Activated CD4-positive, alpha-beta T cell treated with anti-CD3 and anti-CD28 coated beads for 36 hours (primary cell): ENCODE measurements at regions of chr9 and their contacts with region 1.

Region 1: DNA sequence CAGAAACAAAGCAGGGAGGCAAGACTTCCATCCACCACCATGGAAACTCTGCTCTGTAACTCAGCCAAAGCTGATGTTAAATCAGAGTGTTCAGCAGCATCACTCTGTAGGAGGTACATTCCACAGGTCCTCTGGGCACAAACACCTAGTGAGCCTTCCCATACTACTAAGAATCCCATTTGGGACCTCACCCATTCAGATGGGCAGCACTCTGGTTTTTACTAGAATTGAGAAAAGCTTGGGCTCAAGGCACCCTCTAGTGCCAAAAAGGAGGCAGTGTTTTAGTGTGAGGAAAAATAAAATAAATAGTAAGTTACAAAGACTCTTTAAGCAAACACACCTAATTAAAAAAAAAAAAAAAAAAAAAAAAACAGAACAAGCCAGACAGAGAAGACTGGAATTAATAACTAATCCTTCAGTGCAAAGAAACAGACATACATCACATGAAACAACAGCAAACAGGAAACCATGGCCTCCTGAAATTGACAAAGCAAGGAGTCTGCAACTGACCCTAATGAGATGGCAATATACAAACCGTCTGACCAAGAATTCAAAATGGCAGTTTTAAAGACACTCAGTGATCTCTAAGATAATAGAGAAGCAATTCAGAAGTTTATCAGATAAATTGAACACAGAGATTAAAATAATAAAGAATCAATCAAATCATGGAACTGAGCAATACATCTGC is 159.5 kb downstream of the GNA14 start:
- DNase-seq: no peak
- ATAC-seq: peak; percentile 45
- H3K4me3 Mint-ChIP-seq: peak overlapping the region; percentile 57
- H3K27ac Mint-ChIP-seq: no peak overlapping the region
- H3K4me1 Mint-ChIP-seq: peaks cover 20% of the 10 kb centered on the region
- H3K27me3 Mint-ChIP-seq: peaks cover 3% of the 10 kb centered on the region

Region 2: GRCh38 chr9:77498891-77499290 is 10.3 kb after region 1 on chr9:
- CTCF ChIA-PET with region 1: interaction called, 12 read pairs
- POLR2A ChIA-PET with region 1: interaction called, 4 read pairs
- intact Hi-C with region 1: no loop called
- DNase-seq: no peak
- ATAC-seq: no peak
- H3K4me3 Mint-ChIP-seq: no peak overlapping the region
- H3K27ac Mint-ChIP-seq: no peak overlapping the region
- H3K4me1 Mint-ChIP-seq: no peaks in the 10 kb centered on the region
- H3K27me3 Mint-ChIP-seq: no peaks in the 10 kb centered on the region

Region 3: GRCh38 chr9:77510673-77511072 is 22.1 kb after region 1 on chr9:
- CTCF ChIA-PET with region 1: no interaction called
- POLR2A ChIA-PET with region 1: no interaction called
- intact Hi-C with region 1: no loop called
- DNase-seq: no peak
- ATAC-seq: no peak
- H3K4me3 Mint-ChIP-seq: no peak overlapping the region
- H3K27ac Mint-ChIP-seq: no peak overlapping the region
- H3K4me1 Mint-ChIP-seq: peaks cover 3% of the 10 kb centered on the region
- H3K27me3 Mint-ChIP-seq: no peaks in the 10 kb centered on the region